Colonic mucosa (tissue), 4 donors: ENCODE measurements at regions of chr1 and their contacts with region 1.

Region 1: DNA sequence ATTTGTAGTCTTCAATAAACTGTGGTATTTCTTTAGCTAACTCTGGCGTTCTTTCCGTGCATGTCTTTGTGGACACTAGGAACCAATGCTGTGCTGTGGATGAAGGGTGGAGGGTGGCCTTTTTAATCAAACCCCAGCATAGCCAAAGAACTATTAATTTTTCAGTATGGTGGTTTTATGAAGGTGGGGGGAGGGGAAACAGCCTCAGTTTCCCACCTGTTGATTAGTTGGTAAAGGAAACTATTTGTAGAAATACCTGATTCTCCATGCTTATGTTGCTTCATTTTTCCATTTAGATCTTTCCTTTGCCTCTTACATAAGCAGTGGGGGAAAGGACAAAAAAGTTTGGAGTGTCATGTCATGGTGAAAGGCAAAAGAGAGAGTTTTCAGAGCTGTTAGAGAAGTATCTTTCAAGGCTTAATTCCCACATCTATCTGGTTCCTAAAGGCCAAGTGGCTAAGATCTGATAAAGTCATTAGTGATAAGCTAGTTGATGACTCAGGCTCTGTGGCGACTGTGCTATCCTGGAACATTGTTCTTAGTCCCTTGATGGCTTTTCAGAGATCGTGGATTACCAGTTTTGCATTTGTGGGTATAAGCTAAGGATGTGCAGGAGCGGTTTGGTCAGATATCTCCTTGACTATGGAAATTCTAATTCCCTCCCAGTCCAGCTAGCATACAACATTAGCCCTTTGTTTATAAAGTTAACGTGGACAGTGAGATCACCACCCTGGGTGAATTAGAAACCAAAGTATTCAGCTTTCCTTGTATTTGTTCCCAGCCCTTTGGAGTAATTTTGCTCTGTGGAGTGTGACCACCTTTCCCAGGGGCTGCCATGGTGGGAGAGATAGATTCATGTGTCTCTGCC is 8.7 kb upstream of the HAX1 start:
- DNase-seq: no peak
- H3K4me3 ChIP-seq: no peak overlapping the region
- H3K27ac ChIP-seq: no peak overlapping the region
- H3K4me1 ChIP-seq: no peaks in the 10 kb centered on the region
- H3K27me3 ChIP-seq: no peaks in the 10 kb centered on the region
- CTCF ChIP-seq: no peak

Region 2: DNA sequence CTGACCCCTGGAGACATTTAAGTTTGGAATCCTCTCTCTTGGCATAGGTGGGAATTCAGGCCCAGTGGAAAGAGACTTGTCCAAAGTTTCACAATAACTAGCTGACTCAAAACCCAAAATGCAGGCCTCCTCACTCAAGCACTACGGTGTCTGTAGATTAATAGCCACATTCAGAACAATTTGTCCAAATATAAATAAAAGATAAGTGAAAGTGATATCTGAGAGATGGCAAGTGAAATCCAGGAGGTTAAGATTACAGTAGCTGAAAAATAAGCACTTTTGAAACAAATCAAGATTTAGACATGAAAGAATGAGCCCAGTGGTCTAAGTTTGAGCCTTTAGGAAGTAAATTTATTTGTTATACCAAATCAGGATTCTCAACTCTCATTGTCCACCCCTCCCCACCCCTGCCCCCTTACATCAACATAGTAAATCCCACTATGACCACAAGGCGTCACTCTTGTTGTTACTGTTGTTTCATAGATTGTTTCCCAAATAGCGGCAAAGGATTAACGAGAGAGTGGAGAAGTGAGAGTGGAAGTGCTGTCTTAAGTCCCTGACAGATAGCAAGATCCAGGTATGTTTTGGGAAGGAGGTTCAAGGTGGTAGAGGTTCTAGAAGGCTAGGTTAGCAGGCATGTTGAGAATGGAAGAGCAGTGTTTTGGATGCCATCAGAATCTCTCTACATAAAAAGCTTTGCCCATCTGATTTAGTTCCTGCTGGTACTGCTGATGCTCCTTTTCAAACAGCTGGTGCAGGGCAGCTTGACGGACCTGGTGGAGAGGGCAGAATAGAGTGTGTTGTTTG is 64.7 kb before region 1 on chr1:
- intact Hi-C with region 1: loop called (anchors 10 kb)
- DNase-seq: peak; percentile 40
- H3K4me3 ChIP-seq: no peak overlapping the region
- H3K27ac ChIP-seq: no peak overlapping the region
- H3K4me1 ChIP-seq: no peaks in the 10 kb centered on the region
- H3K27me3 ChIP-seq: no peaks in the 10 kb centered on the region
- CTCF ChIP-seq: peak; percentile 30